ENCODE measurements at regions of chrX and their contacts with region 1.

Region 1: DNA sequence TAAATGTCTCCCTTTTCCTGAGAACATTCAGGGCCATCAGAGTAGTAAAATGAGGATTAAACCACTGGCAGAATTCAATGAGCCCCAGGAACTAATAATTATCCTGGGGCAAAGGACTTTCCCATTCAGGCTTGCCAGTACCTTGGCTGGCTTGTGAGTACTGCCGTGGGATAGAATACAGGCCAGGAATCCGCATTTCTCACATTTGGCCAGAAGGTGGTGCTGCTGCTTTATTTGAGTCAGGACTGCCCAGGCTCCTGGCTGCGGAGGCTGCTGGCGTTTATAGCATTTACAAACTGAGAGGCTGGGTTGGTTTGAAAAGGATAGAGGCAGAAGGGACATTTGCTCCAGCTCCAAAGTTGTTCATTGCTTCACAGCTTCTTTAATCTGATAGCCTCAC is 91.4 kb downstream of the RTL9 start:
- DNase-seq: peak; percentile 87

Region 2: DNA sequence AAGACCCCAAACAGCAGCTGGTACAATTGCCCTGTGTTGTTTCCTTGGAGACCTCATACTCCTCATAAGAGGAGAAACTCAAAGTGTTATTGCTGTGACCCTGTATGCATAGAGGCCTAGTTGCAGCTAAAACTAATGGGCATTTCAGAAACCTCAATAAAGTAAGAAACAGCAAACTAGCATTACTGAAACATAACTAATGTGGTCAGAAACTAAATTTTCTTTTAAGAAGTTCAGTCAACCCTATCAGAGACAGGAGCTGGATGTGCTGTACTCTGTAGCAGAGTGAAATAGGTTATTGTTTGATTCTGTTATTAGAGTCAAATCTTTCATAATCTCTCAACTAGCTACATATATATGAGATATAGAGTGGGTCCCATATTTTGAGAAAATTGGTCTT is 1456.1 kb before region 1 on chrX:
- intact Hi-C with region 1: loop called in 1 of 2 experiments (anchors 10 kb)
- DNase-seq: no peak

Region 3: DNA sequence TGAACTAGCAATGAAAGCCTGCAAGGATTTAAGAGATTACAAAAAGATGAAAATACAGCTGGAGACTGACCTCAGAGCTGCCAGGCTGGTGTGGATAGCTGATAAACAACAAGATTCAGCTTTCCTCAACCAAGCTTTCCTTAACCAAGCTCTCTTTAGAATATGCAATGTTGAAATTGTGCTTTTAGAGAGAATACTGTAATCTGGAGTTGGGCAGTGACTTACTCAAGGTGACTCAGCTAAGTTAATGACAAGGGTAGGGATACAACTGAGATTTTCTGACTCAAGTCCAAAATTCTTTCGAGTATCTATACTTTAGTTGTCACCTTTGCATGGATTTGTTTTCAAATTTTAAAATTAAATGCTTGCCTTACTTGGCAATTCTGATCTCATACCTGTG is 230.1 kb before region 1 on chrX:
- intact Hi-C with region 1: no loop called
- DNase-seq: no peak

Region 4: DNA sequence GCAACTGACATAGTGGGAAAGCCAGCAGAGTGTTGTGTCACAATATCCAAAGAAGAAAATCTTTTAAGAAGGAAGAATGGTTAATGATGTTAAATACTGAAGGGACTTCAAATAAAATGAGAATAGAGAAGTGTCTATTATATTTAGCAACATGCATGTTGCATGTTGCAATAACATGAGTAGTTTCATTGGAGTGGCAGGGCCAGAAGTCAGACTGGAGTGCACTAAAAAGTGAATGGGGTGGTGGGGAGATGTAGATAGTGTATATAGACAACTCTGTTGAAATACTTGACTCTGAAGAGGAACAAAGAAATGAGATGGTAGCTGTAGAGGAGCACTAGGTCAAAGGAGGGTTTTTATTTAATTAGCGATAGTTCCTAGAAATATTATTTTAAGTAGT is 122.7 kb before region 1 on chrX:
- intact Hi-C with region 1: no loop called
- DNase-seq: no peak

Region 5: DNA sequence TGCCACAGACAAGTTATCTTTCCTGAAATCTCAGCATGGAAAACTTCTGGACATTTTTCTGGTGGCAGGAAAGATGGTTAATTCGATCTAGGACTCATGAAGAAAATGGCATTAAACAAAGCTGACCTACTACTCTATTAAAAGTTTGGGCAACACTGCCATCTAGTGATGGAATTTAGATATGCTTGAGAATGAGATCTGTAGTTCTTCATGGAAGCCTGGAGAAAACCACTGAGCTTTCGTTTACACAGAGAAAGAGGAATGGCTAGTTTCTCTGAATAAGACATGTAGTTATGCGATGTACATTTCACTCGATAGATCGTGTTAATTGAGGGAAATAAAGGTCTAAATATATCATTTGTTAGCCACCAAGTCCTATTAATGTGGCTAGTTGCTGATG is 397.3 kb after region 1 on chrX:
- intact Hi-C with region 1: loop called (anchors 5 kb)
- DNase-seq: no peak

Region 6: GRCh38 chrX:110853610-110854009 is 403.6 kb after region 1 on chrX:
- intact Hi-C with region 1: loop called (anchors 5 kb)
- DNase-seq: no peak